ENCODE measurements at regions of chr17 and their contacts with region 1.

Region 1: GRCh38 chr17:37489197-37490001 is at the start of gene DUSP14:
- DNase-seq: peak; percentile 91
- H3K4me3 ChIP-seq: peak within 1 kb of the TSS; percentile 69 to 92 (median 84)
- H3K27ac ChIP-seq: peak within 1 kb of the TSS; percentile 90 to 97 (median 93)
- H3K4me1 ChIP-seq: peaks cover 0 to 60% (median 45%) of the 10 kb centered on the region in 4 donors
- H3K27me3 ChIP-seq: no peaks in the 10 kb centered on the region
- CTCF ChIP-seq: no peak
- EP300 ChIP-seq: no peak
- POLR2A ChIP-seq: no peak
- total RNA-seq, gene DUSP14: 18.5 to 25.2 (median 20.4) TPM

Region 2: DNA sequence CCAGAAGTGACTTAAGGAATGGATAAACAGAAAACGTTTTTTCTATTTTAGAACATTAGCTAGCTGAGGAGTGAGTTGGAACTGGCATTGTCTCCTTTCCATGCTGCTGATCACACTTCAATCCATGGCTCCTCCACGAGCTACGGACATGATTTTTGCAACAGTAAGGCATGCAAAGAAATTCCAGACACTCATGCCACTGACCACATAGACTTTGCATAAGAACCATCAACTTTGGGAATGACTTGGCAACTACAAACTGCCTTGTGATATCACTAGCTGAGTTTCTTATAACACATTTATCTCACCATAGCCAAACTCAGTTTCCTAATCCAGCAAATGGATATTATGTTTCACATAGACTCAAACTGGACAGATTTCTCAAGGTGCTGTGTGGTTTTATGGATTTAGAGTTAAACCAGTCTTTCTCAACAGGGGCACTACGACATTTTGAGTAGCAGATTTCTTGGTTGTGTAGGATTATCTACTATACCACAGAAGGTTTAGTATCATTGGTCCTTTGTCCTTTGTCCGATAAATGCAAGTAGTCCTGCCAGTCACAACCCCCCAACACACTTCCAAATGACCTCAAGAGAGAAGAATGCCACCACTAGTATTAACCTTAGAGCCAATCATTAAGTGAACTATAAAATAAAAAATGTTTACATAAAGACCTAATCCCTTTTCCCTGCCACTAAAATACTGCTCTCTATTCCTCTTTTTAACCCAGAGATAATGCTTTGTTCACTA is 161.9 kb before region 1 on chr17:
- intact Hi-C with region 1: no loop called
- DNase-seq: no peak
- H3K4me3 ChIP-seq: no peak overlapping the region
- H3K27ac ChIP-seq: no peak overlapping the region
- H3K4me1 ChIP-seq: no peaks in the 10 kb centered on the region
- H3K27me3 ChIP-seq: no peaks in the 10 kb centered on the region
- CTCF ChIP-seq: no peak
- EP300 ChIP-seq: no peak
- POLR2A ChIP-seq: no peak

Region 3: GRCh38 chr17:37358830-37359681 is 130.3 kb before region 1 on chr17:
- intact Hi-C with region 1: loop called (anchors 2 kb)
- DNase-seq: peak; percentile 96
- H3K4me3 ChIP-seq: peak overlapping the region; percentile 63 to 93 (median 76)
- H3K27ac ChIP-seq: peak overlapping the region; percentile 92 to 97 (median 94)
- H3K4me1 ChIP-seq: peaks cover 0 to 25% (median 22%) of the 10 kb centered on the region in 4 donors
- H3K27me3 ChIP-seq: no peaks in the 10 kb centered on the region
- CTCF ChIP-seq: peak in 1 of 4 experiments; percentile 46
- EP300 ChIP-seq: no peak
- POLR2A ChIP-seq: peak; percentile 16 to 20

Region 4: DNA sequence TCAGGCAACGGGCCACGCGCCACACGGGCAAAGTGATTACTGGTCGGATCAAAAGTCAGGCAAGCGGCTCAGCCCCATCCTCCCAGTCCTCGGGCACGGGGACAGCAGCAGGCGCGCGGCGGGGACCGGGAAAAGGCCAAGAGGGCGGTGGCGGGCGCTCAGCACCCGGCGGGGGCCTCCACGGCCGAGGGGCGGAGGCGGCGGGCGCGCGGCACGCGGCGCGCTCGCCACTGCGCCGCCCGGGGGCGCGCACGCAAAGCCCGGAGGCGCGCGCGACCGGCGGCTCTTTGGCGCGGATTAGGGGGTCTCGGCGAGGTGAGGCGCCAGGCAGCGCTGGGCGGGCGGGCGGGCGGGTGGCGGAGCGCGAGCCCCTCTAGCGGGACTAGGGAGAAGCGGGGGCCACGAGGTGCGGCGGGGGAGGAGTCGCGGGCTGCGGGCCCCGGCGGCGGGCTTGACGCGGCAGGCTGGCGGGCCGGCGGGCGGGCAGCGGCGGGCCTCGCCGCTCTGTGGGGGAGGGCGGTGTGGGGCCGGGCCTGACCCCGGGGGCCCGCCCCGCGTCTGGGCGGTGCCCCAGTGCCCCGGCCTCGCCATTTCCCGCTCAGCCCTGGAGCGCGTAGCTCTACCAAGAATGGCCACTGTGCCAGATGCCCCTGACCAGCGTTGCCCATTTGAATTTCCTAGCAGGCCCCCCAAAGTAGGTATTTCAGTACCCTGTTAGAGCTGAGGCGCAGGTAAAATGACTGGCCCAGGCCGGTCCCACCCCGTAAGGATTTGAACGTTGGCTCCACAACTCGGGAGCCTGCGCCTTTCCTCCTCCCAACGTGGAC is 82.6 kb before region 1 on chr17 and contains the starts of genes ACACA and TADA2A:
- intact Hi-C with region 1: loop called (anchors 2 kb)
- DNase-seq: peak; percentile 88
- H3K4me3 ChIP-seq: peak within 1 kb of the TSS; percentile 80 to 87 (median 84)
- H3K27ac ChIP-seq: peak within 1 kb of the TSS; percentile 92 to 94 (median 94)
- H3K4me1 ChIP-seq: peaks cover 0 to 34% (median 23%) of the 10 kb centered on the region in 4 donors
- H3K27me3 ChIP-seq: no peaks in the 10 kb centered on the region
- CTCF ChIP-seq: peak in 2 of 4 experiments; percentile 9 to 15
- EP300 ChIP-seq: no peak
- POLR2A ChIP-seq: peak; percentile 46 to 52
- total RNA-seq, gene ACACA: 21.1 to 38.9 (median 28.9) TPM
- total RNA-seq, gene TADA2A: 15.0 to 22.7 (median 20.3) TPM

Region 5: DNA sequence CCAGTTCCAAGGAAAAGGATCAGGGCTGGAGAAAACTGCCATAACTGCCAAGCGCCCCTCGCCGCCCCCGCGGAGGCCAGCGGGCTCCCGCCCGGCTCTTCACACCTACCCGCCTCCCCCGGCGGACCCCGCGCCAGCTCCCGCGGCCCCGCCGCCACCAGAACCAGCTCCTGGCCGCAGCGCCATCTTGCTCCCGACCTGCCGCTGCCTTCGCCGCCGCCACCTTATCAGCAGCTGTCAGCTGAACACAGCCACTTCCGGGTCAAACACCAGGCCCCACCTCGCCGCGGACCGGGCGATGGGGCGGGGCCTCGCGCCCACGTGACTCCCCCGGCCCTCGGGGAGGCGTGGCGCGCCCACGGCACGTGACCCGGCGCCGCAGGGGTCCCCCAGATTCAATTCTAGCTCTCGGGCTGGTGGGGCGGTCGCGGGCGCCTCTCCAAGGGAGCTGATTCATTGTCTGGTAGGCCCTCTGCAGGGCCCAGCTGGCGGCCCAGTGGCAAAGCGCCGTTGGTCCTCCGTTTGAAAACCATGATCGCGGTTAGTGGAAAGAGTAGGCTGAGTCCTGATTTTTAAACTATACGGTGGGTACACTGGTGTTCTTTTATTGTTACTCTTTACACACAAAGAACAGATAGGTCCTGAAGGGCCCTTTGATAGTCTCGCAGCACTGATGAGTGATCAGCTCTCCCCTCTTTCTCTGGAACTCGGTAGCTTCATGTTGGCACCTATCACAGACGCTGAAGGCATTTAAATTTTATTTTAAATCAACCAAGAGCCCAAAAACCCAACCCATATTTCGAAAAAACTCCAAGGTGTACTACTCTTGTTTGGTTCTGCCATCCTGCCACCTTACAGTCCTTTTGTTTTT is 120.0 kb after region 1 on chr17 and contains the start of gene SYNRG:
- intact Hi-C with region 1: loop called (anchors 2 kb)
- DNase-seq: peak; percentile 97
- H3K4me3 ChIP-seq: peak within 1 kb of the TSS; percentile 84 to 97 (median 94)
- H3K27ac ChIP-seq: peak within 1 kb of the TSS; percentile 93 to 97 (median 94)
- H3K4me1 ChIP-seq: peaks cover 0 to 37% (median 12%) of the 10 kb centered on the region in 4 donors
- H3K27me3 ChIP-seq: no peaks in the 10 kb centered on the region
- CTCF ChIP-seq: peak in 1 of 4 experiments; percentile 27
- EP300 ChIP-seq: no peak
- POLR2A ChIP-seq: peak; percentile 39 to 44
- total RNA-seq, gene SYNRG: 16.8 to 26.0 (median 20.1) TPM